Right ventricle myocardium superior (tissue), 1 donor: ENCODE measurements at regions of chr19 and their contacts with region 1.

Region 1: DNA sequence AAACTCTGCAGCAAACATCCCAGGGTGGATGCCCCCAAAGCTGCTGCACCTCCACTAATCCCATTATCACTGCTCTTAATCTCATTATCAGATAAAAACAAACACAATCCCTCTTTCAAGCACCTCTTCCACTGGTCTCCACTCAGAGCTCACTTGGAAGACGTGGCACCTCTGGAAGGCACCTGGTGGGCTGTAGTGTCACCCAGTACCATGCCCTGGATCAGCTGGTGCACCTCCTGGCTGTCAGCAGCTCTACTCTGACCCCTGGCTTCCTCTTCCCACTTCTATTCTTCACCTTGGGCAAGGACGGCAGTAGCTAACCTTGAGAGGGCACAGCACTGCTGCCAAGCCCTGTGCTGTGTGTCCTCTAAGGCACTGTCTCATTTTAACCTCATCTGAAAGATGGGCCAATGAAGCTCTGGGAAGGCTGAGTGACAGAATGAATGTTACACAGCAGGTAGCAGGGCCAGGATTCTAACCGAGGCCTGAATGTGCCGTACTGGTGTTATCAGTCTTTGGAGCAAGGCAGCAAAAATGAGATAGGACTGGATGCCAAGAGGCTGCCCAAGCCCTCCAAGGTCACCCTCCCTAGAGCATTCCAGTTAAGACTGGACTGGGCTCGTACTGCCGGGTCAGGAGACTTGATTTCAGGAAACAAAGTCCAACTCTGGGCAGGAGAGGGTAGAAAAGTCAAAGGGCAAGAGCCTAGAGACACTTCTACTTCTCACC is 7.4 kb downstream of the BRD4 start:
- DNase-seq: peak; percentile 49
- ATAC-seq: peak; percentile 63

Region 2: DNA sequence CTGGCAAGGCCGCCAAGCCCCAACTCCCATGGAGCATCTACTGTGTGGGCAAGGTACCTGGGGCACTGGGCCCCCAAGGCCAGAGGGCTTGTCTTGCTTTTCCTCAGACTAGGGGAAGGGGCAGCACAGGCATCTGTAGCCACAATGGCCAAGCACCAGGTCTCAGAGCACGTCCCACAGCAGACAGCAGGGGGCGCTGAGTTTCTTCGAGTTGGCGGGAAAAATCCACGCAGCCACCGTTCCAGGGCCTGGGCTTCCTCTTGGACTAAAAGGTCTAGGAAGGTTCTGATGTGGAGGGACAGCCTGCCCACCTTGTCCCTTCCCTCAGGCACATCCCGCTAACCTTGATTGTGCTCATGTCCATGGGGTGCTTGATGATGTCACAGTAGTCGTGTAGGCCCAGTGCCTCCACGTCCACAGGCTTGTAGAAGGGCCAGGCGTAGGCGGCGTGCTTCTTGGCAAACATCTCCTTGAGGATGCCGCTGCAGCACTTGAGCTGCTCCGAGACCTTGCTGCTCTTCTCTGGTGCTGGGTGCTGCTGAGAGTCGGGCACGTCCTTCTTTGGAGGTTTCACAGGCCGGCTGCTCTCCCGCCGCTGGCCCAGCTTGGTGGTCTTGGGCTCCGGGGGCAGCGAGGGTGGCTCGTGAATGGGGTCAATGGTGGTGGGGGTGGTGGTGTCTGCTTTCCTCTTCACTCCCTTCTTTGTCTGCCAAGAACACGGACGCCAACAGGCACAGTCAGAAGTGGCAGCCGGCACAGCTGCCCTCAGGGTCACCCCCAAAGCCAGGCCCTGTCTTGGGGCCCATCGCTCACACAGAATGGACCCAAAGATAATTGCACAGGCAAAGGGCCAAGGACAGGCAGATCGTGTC is 60.7 kb before region 1 on chr19:
- intact Hi-C with region 1: loop called (anchors 5 kb)
- DNase-seq: peak; percentile 88
- ATAC-seq: peak; percentile 52

Region 3: GRCh38 chr19:15418588-15419412 is 93.8 kb after region 1 on chr19 and contains the start of gene AKAP8L:
- intact Hi-C with region 1: no loop called
- DNase-seq: peak; percentile 99
- ATAC-seq: peak; percentile 95
- total RNA-seq, gene AKAP8L: 74.5 TPM